H1 (cell line): ENCODE measurements at regions of chr12 and their contacts with region 1.

Region 1: GRCh38 chr12:53451661-53452158 is at the start of gene PCBP2:
- DNase-seq: peak; percentile 92 to 98
- H3K4me3 ChIP-seq: peak within 1 kb of the TSS; percentile 89 to 99 (median 94)
- H3K27ac ChIP-seq: peak within 1 kb of the TSS; percentile 96
- H3K4me1 ChIP-seq: peaks cover 0 to 8% (median 1%) of the 10 kb centered on the region in 4 experiments; a peak in 3 of 7 replicates
- H3K27me3 ChIP-seq: no peaks in the 10 kb centered on the region
- CTCF ChIP-seq: peak; percentile 72 to 94 (median 85)
- EP300 ChIP-seq: peak in 1 of 2 experiments; percentile 86; a peak in 1 of 3 replicates
- POLR2A ChIP-seq: peak; percentile 91
- RAD21 ChIP-seq: no peak; a peak in 1 of 4 replicates
- total RNA-seq, gene PCBP2: 1,114 and 1,123 TPM in 2 replicates

Region 2: DNA sequence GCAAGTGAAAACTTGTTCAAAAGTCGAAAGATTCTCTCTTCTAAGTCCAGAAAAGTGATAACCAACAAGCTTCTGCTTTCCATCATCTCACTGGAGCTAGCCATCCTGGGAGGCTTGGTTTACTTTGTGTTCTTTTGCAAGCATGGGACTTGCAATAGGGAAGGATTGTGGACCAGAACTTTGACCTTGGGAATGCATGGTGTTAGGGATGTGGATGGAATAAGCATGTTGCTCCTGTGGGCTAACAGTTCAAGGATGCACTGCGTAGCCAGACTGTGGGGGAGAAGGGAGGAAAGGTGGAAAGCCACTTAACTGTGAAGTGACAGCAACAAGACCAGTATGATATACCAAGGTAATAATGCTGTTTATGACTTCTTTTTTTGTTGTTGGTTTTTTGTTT is 319.9 kb before region 1 on chr12:
- CTCF ChIA-PET with region 1: no interaction called
- POLR2A ChIA-PET with region 1: no interaction called
- DNase-seq: peak in 1 of 2 experiments; percentile 24
- H3K4me3 ChIP-seq: no peak overlapping the region
- H3K27ac ChIP-seq: no peak overlapping the region
- H3K4me1 ChIP-seq: no peaks in the 10 kb centered on the region
- H3K27me3 ChIP-seq: no peaks in the 10 kb centered on the region
- CTCF ChIP-seq: no peak
- EP300 ChIP-seq: no peak
- POLR2A ChIP-seq: no peak
- RAD21 ChIP-seq: no peak

Region 3: GRCh38 chr12:53441040-53441833 is 10.5 kb before region 1 on chr12 and contains the start of gene PRR13:
- CTCF ChIA-PET with region 1: interaction called, 3 read pairs
- POLR2A ChIA-PET with region 1: interaction called, 33 read pairs
- DNase-seq: peak; percentile 95 to 96
- H3K4me3 ChIP-seq: peak within 1 kb of the TSS; percentile 69 to 99 (median 88)
- H3K27ac ChIP-seq: peak within 1 kb of the TSS; percentile 30; the same call in 1 of the 2 replicates
- H3K4me1 ChIP-seq: peaks cover 0 to 8% (median 3%) of the 10 kb centered on the region in 4 experiments; a peak in 4 of 7 replicates
- H3K27me3 ChIP-seq: no peaks in the 10 kb centered on the region
- CTCF ChIP-seq: no peak
- EP300 ChIP-seq: no peak
- POLR2A ChIP-seq: peak; percentile 77 to 91
- RAD21 ChIP-seq: no peak
- total RNA-seq, gene PRR13: 164 and 185 TPM in 2 replicates

Region 4: DNA sequence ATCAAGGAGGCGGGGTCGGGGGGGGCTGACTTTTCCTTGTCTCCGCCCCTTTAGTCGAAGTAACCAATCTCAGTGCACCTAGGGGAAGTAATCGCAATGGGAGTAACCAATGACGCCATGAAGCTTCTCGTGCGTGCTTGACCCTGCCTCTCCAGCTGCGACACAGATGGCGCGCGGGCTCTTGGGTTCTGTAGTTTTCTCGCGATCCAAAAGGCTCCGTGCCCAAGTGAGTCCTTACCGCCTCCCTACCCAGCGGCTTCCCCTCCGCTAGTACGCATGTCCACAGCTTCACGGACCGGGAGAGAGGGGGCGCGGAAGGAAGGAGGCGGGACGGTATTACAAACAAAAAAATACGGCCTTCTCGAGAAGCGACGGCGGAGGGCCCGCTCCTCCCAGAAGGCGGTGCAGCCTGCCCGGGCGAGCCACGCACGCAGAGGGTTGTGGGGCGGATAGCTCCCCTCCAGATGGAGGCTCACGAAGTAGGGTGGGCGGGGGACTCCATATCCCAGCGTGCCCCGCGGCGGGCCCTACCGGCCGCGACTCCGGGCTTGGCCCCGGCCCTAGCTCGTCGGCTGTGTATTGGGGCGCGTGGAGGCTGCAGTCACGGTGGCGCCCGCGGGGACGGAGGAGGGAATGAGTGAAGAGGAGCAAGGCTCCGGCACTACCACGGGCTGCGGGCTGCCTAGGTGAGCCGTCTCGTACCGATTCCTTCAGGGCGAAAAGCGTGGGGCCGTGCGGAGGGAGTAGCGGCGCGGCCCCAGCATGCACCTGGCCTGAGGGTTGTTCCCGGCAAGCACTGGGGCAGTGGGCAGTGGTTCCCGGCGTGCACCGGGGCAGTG is 49.3 kb after region 1 on chr12 and contains the start of gene TARBP2:
- CTCF ChIA-PET with region 1: no interaction called
- POLR2A ChIA-PET with region 1: interaction called, 3,397 read pairs
- DNase-seq: peak; percentile 95 to 97
- H3K4me3 ChIP-seq: peak within 1 kb of the TSS; percentile 55 to 91 (median 77)
- H3K27ac ChIP-seq: peak within 1 kb of the TSS; percentile 91
- H3K4me1 ChIP-seq: peaks cover 9 to 41% (median 20%) of the 10 kb centered on the region in 4 experiments
- H3K27me3 ChIP-seq: no peaks in the 10 kb centered on the region
- CTCF ChIP-seq: no peak
- EP300 ChIP-seq: 0 out of 3 replicates have a peak, but pooled peaks of 1 of the 2 experiments have one; percentile 12
- POLR2A ChIP-seq: peak; percentile 66 to 86
- RAD21 ChIP-seq: no peak
- total RNA-seq, gene TARBP2: 66.1 and 69.9 TPM in 2 replicates